Adrenal gland (tissue), 19 donors: ENCODE measurements at regions of chr19 and their contacts with region 1.

Region 1: GRCh38 chr19:1243761-1244692 is 2.5 kb downstream of the ATP5F1D start:
- DNase-seq: peak; percentile 89 to 94 (median 92)
- H3K4me3 ChIP-seq: peak overlapping the region in 1 of 4 donors; percentile 12
- H3K27ac ChIP-seq: peak overlapping the region; percentile 61 to 99 (median 93)
- H3K4me1 ChIP-seq: peaks cover 60 to 69% of the 10 kb centered on the region in 2 donors
- H3K27me3 ChIP-seq: no peaks in the 10 kb centered on the region
- CTCF ChIP-seq: peak; percentile 90 to 98 (median 96)
- POLR2A ChIP-seq: no peak

Region 2: GRCh38 chr19:1269065-1269477 is 25.0 kb after region 1 on chr19 and contains the start of gene CIRBP:
- intact Hi-C with region 1: loop called (anchors 2 kb)
- DNase-seq: peak; percentile 100
- H3K4me3 ChIP-seq: peak within 1 kb of the TSS; percentile 36 to 84 (median 56)
- H3K27ac ChIP-seq: peak within 1 kb of the TSS; percentile 89 to 100 (median 99)
- H3K4me1 ChIP-seq: peaks cover 56 to 81% of the 10 kb centered on the region in 2 donors
- H3K27me3 ChIP-seq: no peaks in the 10 kb centered on the region
- CTCF ChIP-seq: no peak
- POLR2A ChIP-seq: peak; percentile 97 to 99
- total RNA-seq, gene CIRBP: 317 to 1,164 (median 674) TPM